ENCODE measurements at regions of chr16 and their contacts with region 1.

Region 1: DNA sequence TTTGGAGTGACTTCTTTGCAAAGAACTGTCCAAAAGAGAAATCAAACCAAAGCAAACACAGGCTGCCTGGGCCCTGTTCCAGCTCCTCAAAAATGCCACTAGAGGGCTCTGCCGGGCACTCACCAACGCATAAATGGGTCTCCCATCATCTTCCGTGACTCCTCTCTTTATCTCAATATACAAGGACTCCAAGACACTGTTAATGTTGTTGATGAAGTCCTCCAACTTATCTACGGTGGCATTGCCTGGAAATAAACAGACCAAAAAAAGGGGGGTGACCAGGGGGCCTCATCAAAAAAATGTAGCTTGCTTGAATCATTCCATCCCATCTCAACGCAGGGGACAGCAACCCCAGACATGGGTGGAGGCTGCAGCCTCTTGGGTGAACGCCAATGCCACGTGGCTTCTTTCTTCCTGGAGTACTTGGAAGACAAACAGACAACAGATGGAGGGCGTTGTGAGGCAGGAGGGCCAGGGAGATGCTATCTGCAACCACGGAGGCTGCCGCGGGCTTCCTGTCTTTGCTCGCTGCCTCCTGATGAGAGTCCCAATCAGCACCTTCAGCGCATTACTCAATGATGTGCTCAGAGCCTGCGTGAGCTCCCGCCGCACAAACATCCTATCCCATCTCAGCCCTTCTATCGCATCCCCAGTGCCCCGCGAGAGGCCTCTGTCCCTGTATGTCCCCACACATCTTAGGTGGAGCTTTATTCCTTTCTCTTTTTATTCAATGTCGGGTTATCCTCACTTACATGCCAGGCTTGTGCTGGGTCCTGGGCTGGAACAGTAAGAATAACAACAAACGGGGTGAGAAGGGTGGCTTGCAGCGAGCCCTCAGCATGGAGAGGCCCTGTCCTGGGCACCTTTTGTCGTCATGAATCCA is 32.0 kb downstream of the KDM8 start:
- DNase-seq: peak; percentile 88 to 89
- ATAC-seq: peak; percentile 57 to 89 (median 80)
- H3K4me3 ChIP-seq: peak overlapping the region in 6 of 10 donors; percentile 5 to 36 (median 14)
- H3K27ac ChIP-seq: peak overlapping the region in 9 of 10 donors; percentile 24 to 92 (median 62)
- H3K4me1 ChIP-seq: peaks cover 11 to 76% (median 37%) of the 10 kb centered on the region in 9 donors
- H3K27me3 ChIP-seq: no peaks in the 10 kb centered on the region
- CTCF ChIP-seq: peak; percentile 63 to 91 (median 83)

Region 2: GRCh38 chr16:27179500-27180072 is 55.7 kb before region 1 on chr16:
- intact Hi-C with region 1: loop called in 1 of 10 experiments (anchors 2 kb)
- DNase-seq: peak; percentile 84 to 86
- ATAC-seq: peak; percentile 93 to 97 (median 95)
- H3K4me3 ChIP-seq: no peak overlapping the region
- H3K27ac ChIP-seq: no peak overlapping the region
- H3K4me1 ChIP-seq: peaks cover 0 to 12% (median 0%) of the 10 kb centered on the region in 9 donors
- H3K27me3 ChIP-seq: peaks cover 0 to 9% (median 0%) of the 10 kb centered on the region in 7 donors
- CTCF ChIP-seq: peak; percentile 84 to 97 (median 93)

Region 3: DNA sequence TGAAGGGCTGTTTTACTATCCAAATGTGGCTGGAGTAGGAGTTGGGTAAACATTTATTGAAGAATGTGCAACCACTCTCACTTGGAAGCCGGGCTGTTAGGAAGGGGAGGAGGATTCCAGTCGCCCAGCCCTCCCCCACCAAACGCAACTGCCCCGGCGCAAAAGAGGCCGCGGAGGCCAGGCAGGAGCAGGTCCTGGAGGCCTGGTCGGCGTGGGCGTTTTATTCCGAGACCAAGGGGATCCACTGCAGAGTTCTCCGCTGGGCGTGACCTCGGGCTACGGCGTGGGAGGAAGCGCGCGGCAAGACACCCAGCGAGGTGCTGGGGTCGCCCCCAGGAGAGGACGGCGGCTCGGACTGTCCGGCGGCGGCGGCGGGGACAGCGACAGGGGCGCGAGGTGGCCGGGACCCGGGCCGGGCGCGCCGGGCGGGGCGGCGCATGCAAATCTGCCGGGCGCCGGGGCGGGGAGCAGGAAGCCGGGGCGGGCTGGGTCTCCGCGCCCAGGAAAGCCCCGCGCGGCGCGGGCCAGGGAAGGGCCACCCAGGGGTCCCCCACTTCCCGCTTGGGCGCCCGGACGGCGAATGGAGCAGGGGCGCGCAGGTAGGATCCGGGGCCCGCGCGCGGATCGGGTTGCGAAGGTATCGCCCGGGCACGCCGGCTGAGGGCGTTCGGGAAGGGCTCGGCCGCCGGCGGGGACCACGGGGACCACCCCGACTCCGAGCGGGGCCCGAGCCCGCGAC is 78.3 kb after region 1 on chr16 and contains the start of gene IL4R:
- intact Hi-C with region 1: loop called in 8 of 10 experiments (anchors 2 to 10 kb)
- DNase-seq: peak; percentile 74 to 76
- ATAC-seq: peak; percentile 32 to 67 (median 54)
- H3K4me3 ChIP-seq: peak within 1 kb of the TSS; percentile 70 to 97 (median 86)
- H3K27ac ChIP-seq: peak within 1 kb of the TSS; percentile 88 to 100 (median 96)
- H3K4me1 ChIP-seq: peaks cover 0 to 52% (median 36%) of the 10 kb centered on the region in 9 donors
- H3K27me3 ChIP-seq: peaks cover 0 to 12% (median 0%) of the 10 kb centered on the region in 7 donors
- CTCF ChIP-seq: no peak
- total RNA-seq, gene IL4R: 5.0 to 28.9 (median 9.7) TPM

Region 4: GRCh38 chr16:27355610-27356009 is 120.3 kb after region 1 on chr16:
- intact Hi-C with region 1: loop called in 2 of 10 experiments (anchors 5 to 10 kb)
- DNase-seq: peak; percentile 43 to 56
- ATAC-seq: peak in 5 of 8 donors; percentile 41 to 74 (median 62)
- H3K4me3 ChIP-seq: no peak overlapping the region
- H3K27ac ChIP-seq: no peak overlapping the region
- H3K4me1 ChIP-seq: no peaks in the 10 kb centered on the region
- H3K27me3 ChIP-seq: no peaks in the 10 kb centered on the region
- CTCF ChIP-seq: peak in 7 of 9 donors; percentile 27 to 53 (median 39)

Region 5: DNA sequence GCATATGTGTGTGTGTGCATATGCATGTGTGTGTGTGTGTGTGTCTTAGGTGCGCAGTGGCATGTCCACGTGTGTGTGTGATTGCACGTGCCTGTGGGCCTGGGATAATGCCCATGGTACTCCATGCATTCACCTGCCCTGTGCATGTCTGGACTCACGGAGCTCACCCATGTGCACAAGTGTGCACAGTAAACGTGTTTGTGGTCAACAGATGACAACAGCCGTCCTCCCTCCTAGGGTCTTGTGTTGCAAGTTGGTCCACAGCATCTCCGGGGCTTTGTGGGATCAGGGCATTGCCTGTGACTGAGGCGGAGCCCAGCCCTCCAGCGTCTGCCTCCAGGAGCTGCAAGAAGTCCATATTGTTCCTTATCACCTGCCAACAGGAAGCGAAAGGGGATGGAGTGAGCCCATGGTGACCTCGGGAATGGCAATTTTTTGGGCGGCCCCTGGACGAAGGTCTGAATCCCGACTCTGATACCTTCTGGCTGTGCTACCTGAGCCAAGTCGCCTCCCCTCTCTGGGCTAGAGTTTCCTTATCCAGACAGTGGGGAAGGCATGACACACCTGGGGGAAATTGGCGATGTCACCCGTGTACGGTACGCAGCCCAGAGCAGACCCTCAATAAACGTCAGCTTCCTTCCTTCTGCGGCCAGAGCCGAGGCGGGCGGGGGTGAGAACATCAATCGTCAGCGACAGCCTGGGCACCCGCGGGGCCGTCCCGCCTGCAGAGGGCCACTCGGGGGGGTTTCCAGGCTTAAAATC is 214.3 kb after region 1 on chr16:
- intact Hi-C with region 1: loop called in 2 of 10 experiments (anchors 5 to 10 kb)
- DNase-seq: no peak
- ATAC-seq: peak in 5 of 8 donors; percentile 18 to 63 (median 35)
- H3K4me3 ChIP-seq: no peak overlapping the region
- H3K27ac ChIP-seq: peak overlapping the region in 1 of 10 donors; percentile 34
- H3K4me1 ChIP-seq: peaks cover 0 to 13% (median 0%) of the 10 kb centered on the region in 9 donors
- H3K27me3 ChIP-seq: peaks cover 0 to 54% (median 39%) of the 10 kb centered on the region in 7 donors
- CTCF ChIP-seq: no peak

Region 6: GRCh38 chr16:27549859-27550581 is 314.7 kb after region 1 on chr16 and contains the starts of genes GTF3C1 and KATNIP:
- intact Hi-C with region 1: no loop called
- DNase-seq: peak; percentile 100
- ATAC-seq: peak; percentile 99 to 100 (median 100)
- H3K4me3 ChIP-seq: peak within 1 kb of the TSS; percentile 53 to 93 (median 82)
- H3K27ac ChIP-seq: peak within 1 kb of the TSS; percentile 65 to 92 (median 87)
- H3K4me1 ChIP-seq: peaks cover 8 to 46% (median 39%) of the 10 kb centered on the region in 9 donors
- H3K27me3 ChIP-seq: no peaks in the 10 kb centered on the region
- CTCF ChIP-seq: no peak
- total RNA-seq, gene GTF3C1: 48.1 to 84.5 (median 62.8) TPM
- total RNA-seq, gene KATNIP: 8.6 to 25.0 (median 16.8) TPM

Measured in heart right ventricle (tissue), 16 donors.